ENCODE measurements at regions of chr15 and their contacts with region 1.

Region 1: DNA sequence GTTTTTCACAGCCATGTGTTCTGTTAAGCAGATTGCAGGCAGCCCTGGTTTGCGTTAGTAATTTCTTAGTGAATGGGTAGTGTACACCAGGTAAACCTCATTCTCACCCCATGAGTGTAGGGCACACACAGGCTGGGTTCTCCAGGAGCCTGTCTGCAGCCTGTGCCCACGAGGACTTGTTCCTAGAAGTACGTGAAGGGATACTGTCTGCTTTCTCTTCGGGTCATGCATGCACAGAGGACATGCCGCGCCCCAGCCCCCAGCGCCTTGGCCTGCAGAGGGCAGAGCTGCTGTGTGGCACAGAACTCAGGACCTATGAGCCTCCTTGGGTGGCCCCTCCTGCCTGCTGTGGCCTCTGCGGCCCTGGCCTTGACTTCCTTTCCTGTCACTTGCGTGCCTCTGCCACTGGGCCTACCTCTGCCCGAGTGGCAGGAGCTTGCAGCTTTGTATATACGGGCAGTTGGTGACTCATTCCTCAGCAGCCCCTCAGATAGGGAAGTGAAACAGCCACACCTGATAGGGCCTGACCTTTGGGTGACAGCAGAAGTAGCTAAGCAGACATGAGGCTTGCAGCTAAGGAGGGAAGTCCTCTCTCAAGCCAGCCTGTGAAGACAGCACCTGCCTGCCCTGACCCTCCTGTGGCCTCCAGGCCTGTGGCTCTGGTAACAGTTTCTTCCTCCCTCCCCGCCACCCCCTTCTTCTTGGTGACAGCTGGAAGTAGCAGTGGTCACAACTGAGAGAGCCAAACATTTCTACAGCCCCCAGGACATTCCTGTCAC is 19.5 kb downstream of the PPCDC start:
- DNase-seq: peak; percentile 97

Region 2: GRCh38 chr15:75029378-75030022 is 13.4 kb before region 1 on chr15:
- intact Hi-C with region 1: loop called (anchors 2 kb)
- DNase-seq: peak; percentile 96

Measured in cardiac septum (tissue), 1 donor.